Stomach (tissue), 19 donors: ENCODE measurements at regions of chr19 and their contacts with region 1.

Region 1: DNA sequence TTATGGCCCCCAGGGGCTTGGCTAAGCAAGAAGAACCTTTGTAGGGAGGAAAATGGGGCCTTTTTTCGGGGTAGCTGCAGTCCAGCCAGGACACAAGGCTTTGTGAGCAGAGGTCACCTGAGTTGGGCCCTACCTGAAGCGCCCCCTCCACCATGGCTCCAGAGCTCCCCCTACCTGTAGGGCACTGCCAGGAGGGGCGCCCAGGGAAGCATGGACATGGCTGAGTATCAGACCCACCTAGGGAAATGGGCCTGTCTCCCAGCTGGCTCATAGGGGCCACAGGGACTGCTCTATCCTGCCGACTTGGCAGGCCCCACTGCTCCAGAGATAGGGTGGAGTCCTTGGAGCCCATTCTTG is 9.0 kb upstream of the CEBPA start:
- DNase-seq: peak; percentile 24 to 68
- H3K4me3 ChIP-seq: no peak overlapping the region
- H3K27ac ChIP-seq: peak overlapping the region; percentile 44 to 71 (median 56)
- H3K4me1 ChIP-seq: peaks cover 9 to 32% (median 27%) of the 10 kb centered on the region in 4 donors
- H3K27me3 ChIP-seq: peaks cover 0 to 12% (median 0%) of the 10 kb centered on the region in 3 donors
- CTCF ChIP-seq: peak in 5 of 7 experiments; percentile 21 to 70 (median 38)
- EP300 ChIP-seq: no peak
- POLR2A ChIP-seq: no peak

Region 2: DNA sequence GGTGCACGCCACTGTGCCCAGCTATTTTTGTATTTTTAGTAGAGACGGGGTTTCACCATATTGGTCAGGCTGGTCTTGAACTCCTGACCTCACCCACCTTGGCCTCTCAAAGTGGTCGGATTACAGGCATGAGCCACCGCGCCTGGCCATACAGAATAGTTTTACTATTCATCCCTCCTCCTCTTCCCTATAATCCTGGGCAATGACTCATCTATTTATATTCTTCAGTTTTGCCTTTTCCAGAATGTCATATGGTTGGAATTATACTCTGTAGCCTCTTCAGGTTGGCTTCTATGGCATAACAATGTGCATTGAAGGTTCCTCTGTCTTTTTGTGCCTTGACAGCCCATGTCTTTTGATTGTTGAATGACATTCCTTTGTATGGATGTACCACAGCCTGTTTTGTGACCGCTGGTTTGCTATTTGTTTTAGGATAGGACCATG is 139.4 kb before region 1 on chr19:
- intact Hi-C with region 1: no loop called
- DNase-seq: no peak
- H3K4me3 ChIP-seq: no peak overlapping the region
- H3K27ac ChIP-seq: no peak overlapping the region
- H3K4me1 ChIP-seq: peaks cover 7 to 28% (median 19%) of the 10 kb centered on the region in 4 donors
- H3K27me3 ChIP-seq: no peaks in the 10 kb centered on the region
- CTCF ChIP-seq: no peak
- EP300 ChIP-seq: no peak
- POLR2A ChIP-seq: no peak

Region 3: DNA sequence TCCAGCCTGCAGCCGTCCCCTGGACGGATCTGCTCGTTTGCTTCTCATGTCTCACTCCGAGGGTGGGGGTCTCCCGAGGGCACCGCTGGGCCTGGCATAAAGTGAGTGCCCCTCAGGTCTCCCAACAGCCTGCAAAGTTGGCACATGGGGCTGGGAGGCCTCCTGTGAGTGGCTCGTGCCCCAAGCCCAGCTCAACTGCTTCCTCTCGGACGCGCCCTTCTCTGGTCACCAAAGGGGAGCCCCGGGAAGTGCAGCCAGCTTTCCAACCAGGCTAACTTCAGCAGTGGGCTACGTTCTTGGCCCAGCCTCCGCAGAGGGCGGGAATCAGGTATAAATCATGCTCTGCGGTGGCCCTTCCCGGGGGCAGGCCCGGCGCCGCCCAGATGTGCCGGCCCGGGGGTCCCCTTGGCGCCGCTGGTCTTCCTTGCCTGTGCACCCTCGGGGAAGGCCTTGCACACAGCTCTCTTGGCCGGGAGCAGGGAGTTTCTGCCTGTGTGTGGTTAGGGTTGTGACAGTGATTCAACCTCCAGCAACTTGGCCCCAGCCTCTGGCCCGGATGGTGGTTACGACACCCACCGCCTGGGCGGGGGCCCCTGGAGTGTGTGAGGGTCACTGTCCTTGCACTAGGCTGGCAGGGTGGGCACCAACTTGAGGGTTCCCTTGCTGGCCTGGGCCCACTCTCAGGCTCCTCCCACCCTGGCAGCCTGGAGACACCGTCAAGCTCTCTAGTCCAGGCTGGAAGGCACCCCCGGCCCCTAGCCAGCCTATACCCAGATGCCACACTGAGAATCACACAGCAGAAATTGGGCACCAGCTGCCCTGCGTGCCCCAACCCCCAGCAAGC is 82.9 kb after region 1 on chr19:
- intact Hi-C with region 1: loop called (anchors 10 kb)
- DNase-seq: peak in 1 of 2 donors; percentile 23
- H3K4me3 ChIP-seq: peak overlapping the region in 1 of 4 donors; percentile 6
- H3K27ac ChIP-seq: peak overlapping the region in 4 of 5 donors; percentile 5 to 64 (median 32)
- H3K4me1 ChIP-seq: peaks cover 49 to 83% (median 75%) of the 10 kb centered on the region in 4 donors
- H3K27me3 ChIP-seq: no peaks in the 10 kb centered on the region
- CTCF ChIP-seq: no peak
- EP300 ChIP-seq: no peak
- POLR2A ChIP-seq: no peak